SK-MEL-5 (cell line): ENCODE measurements at regions of chr2 and their contacts with region 1.

Region 1: GRCh38 chr2:74587664-74588277 is 33.3 kb downstream of the DOK1 start:
- DNase-seq: peak; percentile 89

Region 2: DNA sequence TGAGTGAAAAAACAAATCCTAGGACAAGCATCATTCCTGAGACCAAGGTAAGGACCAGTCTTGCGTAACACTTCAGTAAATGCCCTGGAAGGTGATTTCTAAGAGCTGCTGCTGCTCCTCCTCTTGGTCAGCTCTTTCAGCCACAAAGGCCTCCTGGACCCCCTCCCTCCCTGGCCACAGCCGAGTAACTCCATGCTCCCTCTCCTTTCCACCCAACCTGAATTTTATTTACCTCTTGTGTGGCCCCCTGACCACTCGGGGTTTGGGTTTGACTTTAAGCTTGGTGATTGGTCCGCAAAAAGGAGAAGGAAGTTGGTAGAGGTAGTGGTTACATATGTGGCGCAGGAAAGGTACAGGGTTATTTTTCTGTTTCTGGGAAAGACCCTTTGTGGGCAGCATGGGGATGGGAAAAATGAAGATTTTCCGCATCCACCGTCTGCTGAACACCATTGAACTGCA is 48.9 kb before region 1 on chr2:
- in situ Hi-C with region 1: loop called (anchors 5 kb)
- DNase-seq: no peak